Panc1 (cell line): ENCODE measurements at regions of chr2 and their contacts with region 1.

Region 1: GRCh38 chr2:183269956-183270355 is 145.7 kb downstream of the NUP35 start:
- DNase-seq: no peak
- ATAC-seq: no peak
- H3K4me3 ChIP-seq: no peak overlapping the region
- H3K27ac ChIP-seq: no peak overlapping the region
- H3K4me1 ChIP-seq: no peaks in the 10 kb centered on the region
- H3K27me3 ChIP-seq: no peaks in the 10 kb centered on the region
- CTCF ChIP-seq: no peak

Region 2: DNA sequence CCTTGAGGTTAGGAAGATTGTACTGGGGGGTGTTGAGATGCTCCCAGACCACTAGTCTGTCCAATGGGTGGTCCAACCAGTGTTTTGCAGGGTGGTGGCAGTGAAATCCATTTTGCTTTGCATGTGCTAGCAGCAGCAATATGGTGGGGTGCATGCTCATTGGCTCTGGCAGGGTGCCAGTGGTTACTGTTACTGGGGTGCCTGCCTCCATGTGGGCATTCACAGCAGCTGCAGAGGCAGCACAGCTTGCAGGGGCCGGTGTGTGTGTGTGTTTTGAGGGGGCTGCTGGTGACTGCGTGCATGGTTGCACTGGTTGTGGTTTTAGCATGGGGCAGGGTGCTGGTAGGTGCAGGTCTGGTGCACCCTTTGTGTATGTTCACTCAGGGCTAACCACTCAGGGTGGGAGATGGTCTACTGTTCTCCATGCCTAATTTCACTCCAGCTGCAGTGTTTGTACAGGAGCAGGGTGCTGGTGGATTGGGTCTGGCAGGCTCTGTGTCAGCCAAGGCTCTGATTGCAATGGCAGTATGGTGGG is 119.7 kb after region 1 on chr2:
- CTCF ChIA-PET with region 1: no interaction called
- POLR2A ChIA-PET with region 1: no interaction called
- in situ Hi-C with region 1: no loop called
- intact Hi-C with region 1: no loop called
- DNase-seq: no peak
- ATAC-seq: no peak
- H3K4me3 ChIP-seq: no peak overlapping the region
- H3K27ac ChIP-seq: no peak overlapping the region
- H3K4me1 ChIP-seq: no peaks in the 10 kb centered on the region
- H3K27me3 ChIP-seq: no peaks in the 10 kb centered on the region
- CTCF ChIP-seq: no peak

Region 3: GRCh38 chr2:183541766-183542165 is 271.8 kb after region 1 on chr2:
- CTCF ChIA-PET with region 1: no interaction called
- POLR2A ChIA-PET with region 1: interaction called, 10 read pairs
- in situ Hi-C with region 1: no loop called
- intact Hi-C with region 1: no loop called
- DNase-seq: no peak
- ATAC-seq: no peak
- H3K4me3 ChIP-seq: no peak overlapping the region
- H3K27ac ChIP-seq: no peak overlapping the region
- H3K4me1 ChIP-seq: no peaks in the 10 kb centered on the region
- H3K27me3 ChIP-seq: no peaks in the 10 kb centered on the region
- CTCF ChIP-seq: no peak